K562 (cell line): ENCODE measurements at regions of chr9 and their contacts with region 1.

Region 1: DNA sequence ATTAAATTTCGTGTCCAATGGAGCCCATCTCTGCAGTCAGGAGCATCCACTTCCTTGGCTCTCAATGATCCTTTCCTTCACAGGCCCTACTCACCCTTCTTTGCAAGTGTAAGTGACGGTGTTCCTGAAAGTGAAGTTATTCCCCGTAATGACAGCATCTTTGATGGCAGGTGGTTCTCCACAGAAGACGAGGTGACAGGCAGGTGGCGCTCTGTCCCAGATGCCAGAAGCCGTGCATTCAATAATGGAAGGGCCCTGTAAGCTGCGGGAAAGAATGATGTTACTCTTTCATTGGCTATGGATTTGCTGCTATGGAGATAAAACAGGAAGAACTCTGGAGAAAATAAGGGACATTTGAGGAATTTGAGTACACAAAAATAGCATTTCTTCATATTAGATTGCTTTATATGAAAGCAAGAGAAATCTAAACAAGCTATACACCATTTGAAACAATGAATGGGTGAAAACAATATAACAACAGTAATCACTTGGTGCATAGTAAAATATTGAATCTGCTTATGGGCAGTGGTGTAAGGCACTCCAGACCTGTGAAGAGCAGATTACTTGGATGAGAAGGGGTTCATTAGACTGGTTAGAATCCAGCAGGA is 89.9 kb upstream of the TXNDC8 start:
- DNase-seq: peak; percentile 22 to 66 (median 36)
- ATAC-seq: peak; percentile 91
- H3K4me3 ChIP-seq: no peak overlapping the region
- H3K27ac ChIP-seq: no peak overlapping the region
- H3K4me1 ChIP-seq: peaks cover 0 to 11% of the 10 kb centered on the region in 2 experiments; a peak in 2 of 5 replicates
- H3K27me3 ChIP-seq: no peaks in the 10 kb centered on the region
- CTCF ChIP-seq: peak; percentile 68 to 80 (median 72)
- EP300 ChIP-seq: no peak
- POLR2A ChIP-seq: no peak
- RAD21 ChIP-seq: peak; percentile 32 to 70

Region 2: GRCh38 chr9:110340314-110340713 is 87.3 kb before region 1 on chr9:
- CTCF ChIA-PET with region 1: no interaction called
- POLR2A ChIA-PET with region 1: no interaction called
- in situ Hi-C with region 1: no loop called
- intact Hi-C with region 1: loop called (anchors 5 kb)
- DNase-seq: peak in 2 of 4 experiments; percentile 28 to 57
- ATAC-seq: peak; percentile 95
- H3K4me3 ChIP-seq: no peak overlapping the region
- H3K27ac ChIP-seq: no peak overlapping the region
- H3K4me1 ChIP-seq: no peaks in the 10 kb centered on the region; a peak in 1 of 5 replicates
- H3K27me3 ChIP-seq: no peaks in the 10 kb centered on the region
- CTCF ChIP-seq: peak; percentile 61 to 79 (median 64)
- EP300 ChIP-seq: no peak
- POLR2A ChIP-seq: no peak
- RAD21 ChIP-seq: peak; percentile 47 to 76